Dendritic cell treated with granulocyte-macrophage colony-stimulating factor and Interleukin-4, amounts not matched to agents 40 ng/mL and 50 ng/mL, for 4 days (primary cell): ENCODE measurements at regions of chr19 and their contacts with region 1.

Region 1: GRCh38 chr19:37334179-37335071 is 36.5 kb upstream of the ZNF527 start:
- H3K4me3 Mint-ChIP-seq: peak overlapping the region; percentile 95
- H3K27ac Mint-ChIP-seq: peak overlapping the region; percentile 91
- H3K4me1 Mint-ChIP-seq: peaks cover 14% of the 10 kb centered on the region
- H3K27me3 Mint-ChIP-seq: no peaks in the 10 kb centered on the region

Region 2: GRCh38 chr19:37217855-37218591 is 116.4 kb before region 1 on chr19 and contains the start of gene ZNF383:
- intact Hi-C with region 1: loop called (anchors 10 kb)
- H3K4me3 Mint-ChIP-seq: peak within 1 kb of the TSS; percentile 96
- H3K27ac Mint-ChIP-seq: peak within 1 kb of the TSS; percentile 99
- H3K4me1 Mint-ChIP-seq: peaks cover 19% of the 10 kb centered on the region
- H3K27me3 Mint-ChIP-seq: no peaks in the 10 kb centered on the region

Region 3: GRCh38 chr19:37313335-37313627 is 21.1 kb before region 1 on chr19:
- intact Hi-C with region 1: loop called (anchors 1 kb)
- H3K4me3 Mint-ChIP-seq: peak overlapping the region; percentile 67
- H3K27ac Mint-ChIP-seq: peak overlapping the region; percentile 10
- H3K4me1 Mint-ChIP-seq: peaks cover 15% of the 10 kb centered on the region
- H3K27me3 Mint-ChIP-seq: peaks cover 26% of the 10 kb centered on the region

Region 4: GRCh38 chr19:37413243-37414084 is 79.0 kb after region 1 on chr19:
- intact Hi-C with region 1: no loop called
- H3K4me3 Mint-ChIP-seq: no peak overlapping the region
- H3K27ac Mint-ChIP-seq: no peak overlapping the region
- H3K4me1 Mint-ChIP-seq: no peaks in the 10 kb centered on the region
- H3K27me3 Mint-ChIP-seq: no peaks in the 10 kb centered on the region